ENCODE measurements at regions of chr20 and their contacts with region 1.

Region 1: DNA sequence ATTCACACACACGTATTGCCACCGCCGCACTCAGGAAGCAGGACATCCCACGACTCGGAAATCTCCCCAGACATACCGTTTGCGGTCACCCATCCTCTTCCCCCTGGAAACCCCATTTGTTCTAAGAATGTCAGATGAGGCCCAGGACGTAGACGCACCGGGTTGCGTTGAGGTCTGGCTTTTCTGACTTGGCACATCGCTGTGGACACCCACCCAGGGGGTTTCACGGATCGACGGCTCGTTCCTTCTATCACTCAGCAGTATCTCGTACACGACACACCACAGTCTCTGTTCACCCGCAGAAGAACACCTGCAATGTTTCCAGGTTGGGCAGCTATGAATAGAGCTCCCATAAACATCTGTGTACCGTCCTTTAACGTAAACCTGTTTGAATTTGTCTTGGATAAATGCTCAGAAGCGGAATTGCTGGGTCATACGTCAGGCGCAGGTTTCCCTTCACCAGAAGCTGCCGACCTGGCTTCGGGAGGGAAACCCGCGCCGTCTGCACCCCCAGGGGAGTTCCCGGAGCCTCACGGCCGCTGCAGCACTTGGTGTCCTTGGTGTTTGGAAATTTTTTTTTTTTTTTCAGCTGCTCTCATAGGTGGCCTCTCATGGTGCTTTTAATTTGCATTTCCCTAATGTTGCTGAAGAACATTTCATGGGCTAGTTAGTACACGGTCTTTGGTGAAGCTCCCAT is 9.3 kb upstream of the EEF1A2 start:
- DNase-seq: no peak
- H3K4me3 Mint-ChIP-seq: no peak overlapping the region
- H3K27ac Mint-ChIP-seq: no peak overlapping the region
- H3K4me1 Mint-ChIP-seq: no peaks in the 10 kb centered on the region
- H3K27me3 Mint-ChIP-seq: peaks cover 33% of the 10 kb centered on the region

Region 2: DNA sequence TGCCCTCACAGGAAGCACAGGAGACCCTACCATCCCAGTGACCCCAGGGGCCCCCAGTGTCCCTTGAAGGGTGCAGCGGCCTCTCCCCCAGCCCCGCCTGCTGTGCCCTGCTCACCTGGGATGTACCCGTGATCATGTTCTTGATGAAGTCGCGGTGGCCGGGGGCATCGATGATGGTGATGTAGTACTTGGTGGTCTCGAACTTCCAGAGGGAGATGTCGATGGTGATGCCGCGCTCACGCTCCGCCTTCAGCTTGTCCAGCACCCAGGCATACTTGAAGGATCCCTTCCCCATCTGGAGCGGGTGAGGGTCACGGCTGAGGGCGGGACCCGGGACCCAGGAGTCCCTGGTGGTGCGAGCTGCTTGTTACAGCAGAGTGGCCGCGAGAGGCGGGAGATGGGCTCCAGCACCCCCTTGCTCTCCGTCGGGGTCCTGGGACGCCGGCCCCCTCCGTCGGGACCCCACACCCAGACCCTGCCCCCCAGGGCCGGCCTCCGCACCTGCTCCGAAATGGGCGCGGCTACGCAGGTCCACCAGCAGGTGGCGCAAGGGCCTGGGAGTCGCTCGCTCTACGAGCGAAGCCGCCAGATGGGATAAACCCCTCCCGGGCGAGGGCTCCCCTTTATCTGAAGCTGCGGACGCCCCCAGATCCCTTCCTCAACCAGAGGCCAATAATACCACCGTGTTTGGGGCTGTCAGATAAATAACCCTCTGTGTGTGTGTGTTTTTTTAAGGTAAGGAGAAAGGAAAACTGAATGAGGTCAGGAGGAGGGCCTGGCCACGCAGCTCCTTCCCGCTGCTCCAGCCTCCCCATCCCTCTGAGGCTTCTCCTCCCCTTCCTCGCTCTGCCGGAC is 12.3 kb before region 1 on chr20:
- CTCF ChIA-PET with region 1: interaction called, 18 read pairs
- intact Hi-C with region 1: no loop called
- DNase-seq: peak; percentile 84
- H3K4me3 Mint-ChIP-seq: peak overlapping the region; percentile 15
- H3K27ac Mint-ChIP-seq: no peak overlapping the region
- H3K4me1 Mint-ChIP-seq: peaks cover 5% of the 10 kb centered on the region
- H3K27me3 Mint-ChIP-seq: peaks cover 21% of the 10 kb centered on the region

Measured in activated naive CD4-positive, alpha-beta T cell treated with anti-CD3 and anti-CD28 coated beads for 36 hours (primary cell).